Uterus (tissue), 4 donors: ENCODE measurements at regions of chr9 and their contacts with region 1.

Region 1: DNA sequence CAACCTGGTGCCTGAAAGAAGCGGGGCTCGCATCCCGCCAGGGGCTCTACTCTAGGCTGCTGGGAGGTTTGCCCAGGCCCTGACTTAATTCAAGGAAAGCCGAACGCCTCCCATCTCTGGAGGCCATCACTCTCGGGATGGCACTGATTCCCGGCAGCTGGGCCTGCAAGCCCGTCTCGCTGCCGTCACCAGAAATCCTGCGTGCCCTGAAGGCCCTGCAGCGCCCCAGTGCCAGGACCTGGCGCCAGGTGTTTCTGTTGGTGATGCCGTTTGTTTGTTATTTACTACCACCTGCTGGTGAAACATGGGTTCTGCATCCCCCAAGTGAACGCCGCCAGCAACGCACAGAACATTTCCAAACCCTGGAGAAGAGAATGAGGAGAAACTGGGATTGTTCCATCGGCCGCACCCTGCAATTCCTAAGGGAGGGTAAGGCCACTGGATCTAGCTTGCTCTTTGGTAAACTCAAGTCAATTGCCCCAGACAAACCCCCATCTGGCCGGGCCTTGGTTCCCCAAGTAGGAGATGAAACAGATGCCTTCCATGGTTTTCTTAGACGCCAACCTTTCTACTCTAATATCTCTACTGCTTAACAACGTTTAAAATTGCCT is 77.9 kb downstream of the AK8 start:
- DNase-seq: peak; percentile 46 to 61
- H3K4me3 ChIP-seq: no peak overlapping the region
- H3K27ac ChIP-seq: no peak overlapping the region
- H3K4me1 ChIP-seq: no peaks in the 10 kb centered on the region
- H3K27me3 ChIP-seq: no peaks in the 10 kb centered on the region
- CTCF ChIP-seq: peak; percentile 84 to 87 (median 87)
- POLR2A ChIP-seq: no peak

Region 2: DNA sequence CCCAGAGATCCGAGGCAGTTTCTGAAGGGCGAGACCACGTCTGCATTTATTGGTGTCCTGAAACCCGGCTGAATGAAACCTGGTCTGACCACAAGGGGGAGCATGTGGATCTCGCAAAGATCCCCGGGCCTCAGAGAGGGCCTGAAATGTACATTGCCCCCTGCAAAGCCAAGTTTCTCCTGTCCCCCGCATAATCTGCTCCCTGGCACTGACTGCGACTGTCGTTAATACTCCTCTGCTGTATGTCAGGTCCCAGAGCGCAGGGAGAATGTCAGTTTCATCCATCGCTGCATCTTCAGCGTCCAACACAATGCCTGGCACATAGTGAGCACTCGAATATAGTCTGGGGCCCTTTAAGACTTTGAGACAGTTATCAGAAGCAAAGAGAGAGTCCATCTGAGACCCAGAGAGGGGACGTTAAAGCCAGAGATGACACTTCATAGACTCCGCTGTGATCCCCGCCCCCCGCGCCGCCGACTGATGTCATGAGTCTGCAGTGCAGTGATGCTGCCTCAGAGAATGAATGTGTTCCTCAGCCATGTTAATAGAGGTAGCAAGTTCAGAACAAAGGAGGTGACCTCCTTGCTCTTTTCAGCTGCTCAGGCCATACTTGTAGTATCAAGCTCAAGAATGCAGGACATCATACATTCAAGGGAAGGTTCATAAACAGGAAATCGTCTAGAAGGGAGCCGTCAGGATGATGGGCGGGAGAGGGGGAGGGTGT is 292.2 kb before region 1 on chr9:
- intact Hi-C with region 1: loop called (anchors 5 kb)
- DNase-seq: peak; percentile 39 to 46
- H3K4me3 ChIP-seq: no peak overlapping the region
- H3K27ac ChIP-seq: no peak overlapping the region
- H3K4me1 ChIP-seq: no peaks in the 10 kb centered on the region
- H3K27me3 ChIP-seq: no peaks in the 10 kb centered on the region
- CTCF ChIP-seq: peak; percentile 63 to 72 (median 72)
- POLR2A ChIP-seq: no peak

Region 3: GRCh38 chr9:132560616-132561202 is 239.4 kb before region 1 on chr9:
- intact Hi-C with region 1: no loop called
- DNase-seq: no peak
- H3K4me3 ChIP-seq: no peak overlapping the region
- H3K27ac ChIP-seq: no peak overlapping the region
- H3K4me1 ChIP-seq: no peaks in the 10 kb centered on the region
- H3K27me3 ChIP-seq: no peaks in the 10 kb centered on the region
- CTCF ChIP-seq: no peak
- POLR2A ChIP-seq: no peak

Region 4: DNA sequence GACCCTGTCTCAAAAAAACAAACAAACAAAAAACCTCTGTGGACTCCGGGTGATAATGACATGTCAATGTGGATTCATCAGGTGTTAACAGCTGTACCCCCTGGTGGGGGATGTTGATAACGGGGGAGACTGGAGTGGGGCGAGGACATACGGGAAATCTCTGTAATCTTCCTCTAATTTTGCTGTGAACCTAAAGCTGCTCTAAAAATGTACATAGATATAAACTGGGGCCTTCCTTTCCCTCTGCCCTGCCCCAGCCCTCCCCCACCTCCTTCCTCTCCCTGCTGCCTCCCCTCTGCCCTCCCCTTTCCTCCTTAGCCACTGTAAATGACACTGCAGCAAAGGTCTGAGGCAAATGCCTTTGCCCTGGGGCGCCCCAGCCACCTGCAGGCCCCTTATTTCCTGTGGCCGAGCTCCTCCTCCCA is 260.3 kb after region 1 on chr9:
- intact Hi-C with region 1: no loop called
- DNase-seq: no peak
- H3K4me3 ChIP-seq: no peak overlapping the region
- H3K27ac ChIP-seq: no peak overlapping the region
- H3K4me1 ChIP-seq: no peaks in the 10 kb centered on the region
- H3K27me3 ChIP-seq: no peaks in the 10 kb centered on the region
- CTCF ChIP-seq: no peak
- POLR2A ChIP-seq: no peak